ENCODE measurements at regions of chr9 and their contacts with region 1.

Region 1: DNA sequence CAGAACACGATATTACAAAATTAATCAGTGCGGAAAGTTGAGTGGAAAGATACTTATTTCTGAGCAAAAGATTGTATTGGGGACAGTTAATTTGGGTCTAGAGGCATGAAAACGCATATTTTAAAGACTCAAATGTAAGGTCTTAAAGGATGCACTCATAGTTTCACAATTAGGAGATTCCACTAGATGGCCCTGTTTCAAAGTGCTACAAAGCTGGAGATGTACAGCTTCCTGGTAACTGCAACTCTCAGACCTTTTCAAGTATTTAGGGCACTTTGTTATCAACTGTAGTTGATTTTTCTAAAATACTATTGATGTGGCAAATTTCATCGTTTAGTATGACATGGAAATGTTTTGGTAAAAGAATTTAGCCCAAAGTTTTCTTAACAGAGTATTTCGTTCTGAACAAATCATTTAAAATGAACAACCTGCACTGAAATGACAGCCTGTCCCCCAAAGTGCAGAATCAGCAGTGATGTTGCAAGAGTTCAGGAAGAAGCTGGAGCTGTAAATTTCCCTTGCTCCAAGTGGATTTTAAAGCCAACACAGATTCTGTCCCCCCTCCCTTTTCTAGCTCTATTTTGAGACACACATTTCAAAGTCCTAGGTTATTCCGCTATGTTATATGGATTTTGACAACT is 16.2 kb upstream of the NDUFB6 start:
- DNase-seq: no peak
- ATAC-seq: peak; percentile 51

Region 2: DNA sequence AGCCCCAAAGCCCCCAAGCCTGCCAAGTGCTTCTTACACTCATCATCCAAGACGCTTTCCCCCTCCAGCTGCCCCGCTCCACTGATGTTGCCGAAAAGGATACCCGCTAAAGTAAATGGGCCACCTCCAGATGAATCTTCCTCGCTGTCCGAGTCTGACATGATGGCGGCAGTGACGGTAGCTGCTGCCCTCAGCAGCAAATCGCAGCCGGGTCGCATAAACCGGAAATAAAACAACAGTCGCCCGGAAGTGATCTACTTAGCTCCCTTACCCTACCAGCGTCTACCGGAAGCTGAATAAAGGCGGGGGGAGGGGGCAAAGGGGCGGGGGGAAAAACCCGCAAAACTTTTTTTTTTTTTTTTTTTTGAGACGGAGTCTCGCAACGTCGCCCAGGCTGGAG is 46.2 kb after region 1 on chr9 and contains the start of gene TAF1L:
- intact Hi-C with region 1: no loop called
- DNase-seq: no peak
- ATAC-seq: no peak
- total RNA-seq, gene TAF1L: not detected

Region 3: GRCh38 chr9:32968101-32969011 is 379.2 kb after region 1 on chr9:
- intact Hi-C with region 1: loop called in 1 of 2 experiments (anchors 5 kb)
- DNase-seq: peak in 1 of 2 donors; percentile 68
- ATAC-seq: peak; percentile 39

Measured in left colon (tissue), 2 donors.